ENCODE measurements at regions of chr17 and their contacts with region 1.

Region 1: DNA sequence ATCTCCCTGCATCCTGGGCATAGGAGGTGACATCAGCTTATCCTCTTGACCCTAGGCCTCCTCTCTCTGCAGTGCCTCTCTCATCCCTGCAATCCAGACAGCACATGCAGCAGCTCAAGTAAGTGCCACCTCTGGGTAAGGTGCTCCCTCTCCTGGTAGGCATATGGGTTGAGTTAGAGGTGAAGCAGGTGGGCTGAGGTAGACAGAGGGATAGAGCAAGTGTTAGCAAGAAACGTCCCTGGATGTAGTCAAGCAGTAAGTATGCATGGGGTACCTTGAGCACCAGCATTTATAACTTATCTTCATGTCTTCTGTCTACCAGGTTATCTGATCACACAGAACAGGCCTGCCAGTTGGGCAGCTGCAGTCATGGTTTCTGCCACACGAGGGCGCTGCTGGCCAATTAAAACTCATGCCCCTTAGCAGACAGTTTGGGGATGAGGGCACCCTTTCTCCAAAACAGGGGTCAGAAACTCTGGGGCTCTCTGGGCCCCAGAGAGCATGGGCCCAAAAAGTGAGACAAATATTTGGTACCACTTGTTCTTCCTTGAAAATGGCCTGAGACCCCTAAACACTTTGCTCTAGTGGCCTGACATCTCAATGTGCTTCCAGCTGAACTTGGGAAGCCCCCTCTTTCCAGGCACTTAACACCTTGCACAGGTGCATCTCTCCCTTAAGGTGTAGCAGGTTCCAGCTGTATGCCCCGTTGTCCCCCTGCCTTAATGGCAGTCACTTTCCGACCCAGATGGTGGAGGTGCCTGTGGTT is 59.8 kb downstream of the NEUROD2 start:
- DNase-seq: peak; percentile 34 to 82 (median 53)
- ATAC-seq: peak; percentile 50 to 81 (median 71)
- H3K4me3 ChIP-seq: no peak overlapping the region
- H3K27ac ChIP-seq: no peak overlapping the region
- H3K4me1 ChIP-seq: peaks cover 0 to 27% (median 10%) of the 10 kb centered on the region in 12 donors
- H3K27me3 ChIP-seq: no peaks in the 10 kb centered on the region
- CTCF ChIP-seq: peak; percentile 84 to 96 (median 93)
- POLR2A ChIP-seq: no peak

Region 2: DNA sequence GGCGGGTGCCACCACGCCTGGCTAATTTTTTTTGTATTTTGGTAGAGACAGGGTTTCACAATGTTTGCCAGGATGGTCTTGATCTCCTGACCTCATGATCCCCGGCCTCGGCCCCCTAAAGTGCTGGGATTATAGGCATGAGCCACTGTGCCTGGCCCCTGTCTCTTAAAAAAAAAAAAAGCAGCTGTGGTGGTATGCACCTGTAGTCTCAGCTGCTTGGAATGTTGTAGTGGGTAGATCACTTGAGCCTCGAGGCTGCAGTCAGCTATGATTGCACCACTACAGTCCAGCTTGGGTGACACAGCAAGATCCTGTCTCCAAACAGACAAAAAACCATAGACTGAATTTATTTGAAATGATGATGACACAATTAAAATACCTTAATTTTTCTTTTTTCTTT is 62.3 kb before region 1 on chr17:
- intact Hi-C with region 1: no loop called
- DNase-seq: no peak
- ATAC-seq: no peak
- H3K4me3 ChIP-seq: no peak overlapping the region
- H3K27ac ChIP-seq: no peak overlapping the region
- H3K4me1 ChIP-seq: no peaks in the 10 kb centered on the region
- H3K27me3 ChIP-seq: no peaks in the 10 kb centered on the region
- CTCF ChIP-seq: no peak
- POLR2A ChIP-seq: no peak

Region 3: DNA sequence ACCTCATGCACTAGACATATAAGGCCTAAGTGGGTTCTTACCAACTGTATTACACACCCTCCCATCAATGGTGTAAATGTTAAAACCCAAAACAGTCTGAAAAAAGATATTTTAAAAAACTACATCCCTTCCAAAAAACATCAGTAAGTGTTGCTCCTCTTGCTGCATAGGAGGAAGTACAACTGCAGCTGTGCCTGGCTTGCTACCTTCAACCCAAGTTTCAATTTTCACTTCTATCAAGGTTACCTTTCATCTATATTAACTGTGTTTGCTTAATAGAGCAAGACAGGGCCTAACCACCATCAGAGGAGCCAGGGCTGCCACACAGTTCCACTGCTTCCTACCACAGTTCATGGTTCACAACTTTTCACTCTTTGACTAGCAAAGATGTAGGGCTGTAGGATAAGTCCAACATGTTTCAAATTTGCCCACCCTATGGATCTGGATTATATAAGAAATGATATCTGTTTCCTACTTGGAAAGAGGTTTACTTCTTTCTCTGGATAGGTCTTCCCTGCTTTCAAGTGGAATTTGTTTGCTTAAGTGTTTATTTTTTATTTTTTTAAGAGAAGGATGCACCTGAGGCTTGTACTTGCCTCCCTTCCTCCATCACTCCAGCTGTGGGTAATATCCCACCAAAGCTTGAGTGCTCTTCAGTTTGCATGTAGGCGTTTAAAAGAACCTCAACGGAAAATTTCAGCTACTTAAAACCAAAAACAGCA is 246.5 kb after region 1 on chr17:
- intact Hi-C with region 1: no loop called
- DNase-seq: no peak
- ATAC-seq: no peak
- H3K4me3 ChIP-seq: no peak overlapping the region
- H3K27ac ChIP-seq: peak overlapping the region in 1 of 12 donors; percentile 56
- H3K4me1 ChIP-seq: no peaks in the 10 kb centered on the region
- H3K27me3 ChIP-seq: peaks cover 0 to 19% (median 6%) of the 10 kb centered on the region in 9 donors
- CTCF ChIP-seq: no peak
- POLR2A ChIP-seq: no peak

Region 4: DNA sequence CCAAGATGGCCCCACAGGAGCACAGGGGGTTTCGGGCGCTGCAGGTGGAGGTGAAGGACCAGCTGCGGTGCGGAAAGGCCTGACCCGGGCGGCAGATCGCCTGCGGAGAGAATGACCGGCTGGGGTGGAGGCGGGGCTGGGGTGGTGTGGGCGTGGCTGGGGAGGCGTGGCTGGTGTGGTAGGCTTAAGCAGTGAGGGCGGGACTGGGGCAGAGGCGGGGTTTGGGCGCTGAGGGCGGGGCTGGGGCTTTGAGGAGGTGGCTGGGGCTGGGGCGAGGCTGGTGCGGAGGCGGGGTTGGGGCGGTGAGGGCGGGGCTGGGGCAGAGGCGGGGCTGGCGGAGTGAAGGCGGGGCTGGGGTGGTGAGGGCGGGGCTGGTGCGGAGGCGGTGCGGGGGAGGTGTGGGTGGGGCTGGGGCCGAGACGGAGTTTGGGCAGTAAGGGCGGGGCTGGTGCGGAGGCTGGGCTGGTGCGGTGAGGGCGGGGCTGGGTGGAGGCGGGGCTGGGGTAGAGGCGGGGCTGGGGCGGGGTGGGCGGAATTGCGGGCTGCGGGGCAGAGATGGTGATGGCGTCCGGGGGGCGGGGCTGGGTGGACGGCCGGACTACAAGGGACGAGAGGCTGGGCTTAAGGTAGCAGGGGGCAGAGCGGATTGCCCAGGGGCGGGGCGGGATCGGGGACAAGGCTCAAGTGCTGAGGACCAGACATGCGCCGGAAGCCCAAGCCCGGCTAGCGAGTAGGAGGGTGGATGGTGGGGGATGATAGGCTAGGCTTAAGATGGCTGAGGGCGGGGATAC is 405.0 kb after region 1 on chr17:
- intact Hi-C with region 1: loop called in 1 of 10 experiments (anchors 10 kb)
- DNase-seq: peak; percentile 98 to 99 (median 98)
- ATAC-seq: peak; percentile 92 to 95 (median 94)
- H3K4me3 ChIP-seq: peak overlapping the region in 10 of 12 donors; percentile 26 to 62 (median 48)
- H3K27ac ChIP-seq: peak overlapping the region in 10 of 12 donors; percentile 2 to 78 (median 60)
- H3K4me1 ChIP-seq: peaks cover 0 to 33% (median 13%) of the 10 kb centered on the region in 12 donors
- H3K27me3 ChIP-seq: no peaks in the 10 kb centered on the region
- CTCF ChIP-seq: no peak
- POLR2A ChIP-seq: peak in 1 of 2 donors; percentile 35